ENCODE measurements at regions of chr10 and their contacts with region 1.

Region 1: DNA sequence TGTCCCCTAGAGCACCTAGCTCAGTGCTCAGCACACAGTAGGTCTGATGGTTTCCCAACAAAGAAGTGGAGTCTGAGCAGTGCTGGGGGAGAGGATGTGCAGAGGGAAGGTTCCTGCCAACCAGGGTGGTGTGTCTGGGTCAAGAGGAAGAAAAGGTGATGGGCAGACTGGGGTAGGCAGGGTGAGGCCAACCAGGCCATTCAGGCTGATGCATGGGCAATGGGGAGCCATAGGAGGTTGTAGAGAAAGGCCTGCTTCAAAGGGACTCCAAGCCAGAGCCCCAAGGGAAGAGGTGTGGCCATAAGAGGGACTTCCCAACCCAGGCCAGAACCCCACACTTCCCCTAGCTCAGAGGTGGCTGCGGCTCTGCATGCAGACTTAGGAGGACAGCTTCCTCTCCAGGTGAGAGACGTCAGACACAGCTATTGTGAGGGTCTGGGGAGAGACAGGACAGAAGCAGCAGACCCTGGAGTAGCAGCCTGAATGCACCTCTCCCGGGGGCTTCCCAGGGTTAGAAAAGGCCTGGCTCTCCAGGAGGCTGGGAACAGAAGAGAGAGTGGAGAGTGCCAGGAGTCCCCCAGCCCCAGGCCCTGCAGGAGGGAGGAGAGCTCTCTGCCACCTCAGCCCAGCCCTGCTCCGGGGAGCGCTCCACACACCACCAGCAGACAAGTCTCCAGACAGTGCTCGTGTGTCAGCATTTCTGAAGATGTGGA is 87.4 kb upstream of the ZMIZ1 start:
- DNase-seq: no peak
- ATAC-seq: peak in 4 of 8 donors; percentile 2 to 39 (median 16)
- H3K4me3 ChIP-seq: no peak overlapping the region
- H3K27ac ChIP-seq: no peak overlapping the region
- H3K4me1 ChIP-seq: peaks cover 0 to 20% (median 4%) of the 10 kb centered on the region in 9 donors
- H3K27me3 ChIP-seq: no peaks in the 10 kb centered on the region
- CTCF ChIP-seq: no peak

Region 2: GRCh38 chr10:78865538-78865875 is 115.9 kb before region 1 on chr10:
- intact Hi-C with region 1: loop called in 1 of 10 experiments (anchors 10 kb)
- DNase-seq: no peak
- ATAC-seq: no peak
- H3K4me3 ChIP-seq: no peak overlapping the region
- H3K27ac ChIP-seq: no peak overlapping the region
- H3K4me1 ChIP-seq: peaks cover 0 to 8% (median 0%) of the 10 kb centered on the region in 9 donors
- H3K27me3 ChIP-seq: peaks cover 0 to 6% (median 0%) of the 10 kb centered on the region in 7 donors
- CTCF ChIP-seq: no peak

Region 3: DNA sequence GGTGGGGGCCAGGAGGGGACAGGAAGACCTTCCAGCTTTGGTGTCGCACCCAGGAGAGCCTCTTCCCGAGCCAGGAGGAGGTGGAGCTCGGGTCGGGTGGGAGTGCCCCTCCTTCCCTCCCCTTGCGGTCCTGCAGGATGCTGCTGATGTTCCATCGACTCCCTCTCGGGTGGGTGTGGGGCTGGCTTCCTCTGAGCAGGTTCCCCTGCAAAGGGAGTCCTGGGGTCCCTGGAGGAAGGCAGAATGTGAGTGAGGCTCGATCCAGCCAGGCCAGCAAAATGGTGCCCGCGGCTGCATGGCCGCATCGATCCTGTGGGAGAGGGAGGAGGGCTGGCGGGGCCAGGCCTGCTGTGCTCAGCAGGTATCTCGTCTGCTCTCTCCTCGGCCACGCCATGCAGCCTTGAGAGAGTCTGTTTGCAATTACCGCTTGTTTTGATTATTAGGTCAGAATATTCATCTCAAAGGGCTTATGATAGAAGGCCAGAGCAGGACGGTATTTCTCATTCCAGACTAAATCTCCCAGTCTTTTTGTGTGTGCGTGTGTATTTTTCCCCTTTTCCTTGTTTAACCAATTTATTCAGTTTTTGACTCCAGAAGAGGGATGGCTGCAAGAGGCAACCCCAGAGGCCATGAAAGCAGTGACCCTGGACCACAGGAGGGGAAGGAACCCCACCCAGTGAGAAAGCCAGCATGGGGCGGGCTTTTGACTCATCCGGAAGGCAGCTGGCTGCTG is 49.9 kb before region 1 on chr10:
- intact Hi-C with region 1: no loop called
- DNase-seq: peak; percentile 43 to 54
- ATAC-seq: peak; percentile 21 to 85 (median 76)
- H3K4me3 ChIP-seq: no peak overlapping the region
- H3K27ac ChIP-seq: peak overlapping the region in 8 of 10 donors; percentile 28 to 76 (median 57)
- H3K4me1 ChIP-seq: peaks cover 0 to 33% (median 15%) of the 10 kb centered on the region in 9 donors
- H3K27me3 ChIP-seq: no peaks in the 10 kb centered on the region
- CTCF ChIP-seq: no peak

Region 4: DNA sequence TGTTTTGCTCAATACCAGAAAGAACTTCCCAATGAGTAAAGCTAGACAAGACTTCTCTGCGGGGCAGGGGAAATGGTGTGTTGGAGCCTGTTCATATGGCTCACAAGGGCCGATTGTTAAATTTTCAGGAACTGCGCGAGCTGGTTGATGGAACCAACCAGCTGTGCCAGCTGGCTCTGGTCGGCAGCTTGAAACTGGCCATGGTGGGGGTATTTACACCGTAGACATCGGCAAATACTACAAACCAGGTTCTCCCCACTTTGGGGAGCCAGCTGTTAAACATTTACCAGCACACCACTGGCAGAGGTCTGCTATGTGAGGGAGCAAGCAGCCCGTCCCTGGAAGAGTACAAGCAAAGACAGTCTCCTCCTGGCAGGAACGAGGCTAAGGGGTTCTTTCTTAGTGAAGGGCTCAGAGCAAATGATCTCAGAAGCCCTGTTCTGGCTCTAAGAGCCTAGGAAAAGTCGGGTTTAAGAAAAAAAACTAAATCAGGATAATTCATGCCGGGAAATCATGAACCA is 78.5 kb after region 1 on chr10:
- intact Hi-C with region 1: loop called in 4 of 10 experiments (anchors 5 to 10 kb)
- DNase-seq: no peak
- ATAC-seq: no peak
- H3K4me3 ChIP-seq: no peak overlapping the region
- H3K27ac ChIP-seq: no peak overlapping the region
- H3K4me1 ChIP-seq: peaks cover 0 to 14% (median 5%) of the 10 kb centered on the region in 9 donors
- H3K27me3 ChIP-seq: no peaks in the 10 kb centered on the region
- CTCF ChIP-seq: no peak

Measured in heart right ventricle (tissue), 16 donors.